PC-3 (cell line): ENCODE measurements at regions of chr12 and their contacts with region 1.

Region 1: DNA sequence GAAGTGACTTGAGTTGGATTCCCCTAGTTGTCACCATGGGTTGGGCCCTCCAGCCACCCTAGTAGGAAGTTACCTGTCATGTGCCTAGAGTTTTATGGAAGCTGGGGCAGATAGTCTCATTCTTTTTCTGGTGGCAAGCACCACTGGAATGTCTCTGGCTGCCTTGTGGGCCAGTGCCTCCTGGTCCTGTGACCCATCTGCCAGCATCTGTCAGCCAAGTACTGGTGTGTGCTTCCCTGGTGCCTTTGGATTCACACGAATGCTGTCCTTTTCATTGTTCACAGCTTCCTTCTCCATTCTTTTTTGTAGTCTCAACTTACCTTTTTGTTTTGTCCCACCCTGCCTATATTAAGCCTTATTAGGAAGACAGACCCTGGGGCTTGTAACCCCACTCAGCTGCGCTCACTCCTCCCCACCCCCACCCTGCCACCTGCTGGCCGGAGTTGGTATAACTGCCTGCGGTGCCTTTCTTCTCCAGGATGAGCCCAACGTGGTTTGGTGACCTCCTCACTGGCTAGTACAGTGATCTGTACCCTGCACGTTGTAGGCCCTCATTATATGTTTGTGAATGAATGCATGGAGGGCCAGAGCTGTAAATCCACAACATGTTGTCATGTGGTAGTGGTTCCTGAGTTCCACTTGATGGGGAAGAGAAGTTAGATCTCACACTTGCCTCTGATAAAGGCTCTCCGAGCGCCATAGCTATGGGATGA is 125.7 kb downstream of the TSPAN9 start:
- DNase-seq: peak; percentile 64
- ATAC-seq: peak; percentile 8; the same call in 1 of the 2 replicates
- H3K4me3 ChIP-seq: no peak overlapping the region
- H3K27ac ChIP-seq: no peak overlapping the region
- H3K4me1 ChIP-seq: peaks cover 9% of the 10 kb centered on the region
- H3K27me3 ChIP-seq: peaks cover 22% of the 10 kb centered on the region
- CTCF ChIP-seq: peak; percentile 94

Region 2: DNA sequence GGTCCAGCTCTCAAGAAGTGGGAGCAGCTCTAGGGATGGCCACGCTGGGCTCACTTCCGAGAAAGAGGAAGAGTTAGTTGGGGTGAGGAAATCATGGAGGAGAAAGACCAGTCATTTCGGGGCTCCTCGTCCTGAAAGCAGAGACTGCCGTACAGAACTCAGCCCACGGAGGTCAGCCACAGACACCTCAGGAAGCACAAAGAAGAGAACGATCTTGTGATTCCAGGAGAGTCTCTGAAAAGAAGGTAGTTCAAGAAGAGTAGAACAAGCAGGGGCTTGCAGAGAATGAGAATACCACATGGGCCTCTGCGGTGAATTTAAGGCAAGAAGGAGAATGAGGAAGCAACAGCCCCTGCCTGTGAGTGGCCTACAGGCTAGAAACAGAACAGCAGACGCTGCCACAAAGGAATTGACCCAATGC is 838.2 kb before region 1 on chr12:
- CTCF ChIA-PET with region 1: no interaction called
- POLR2A ChIA-PET with region 1: no interaction called
- intact Hi-C with region 1: no loop called
- DNase-seq: no peak
- ATAC-seq: no peak
- H3K4me3 ChIP-seq: no peak overlapping the region
- H3K27ac ChIP-seq: no peak overlapping the region
- H3K4me1 ChIP-seq: no peaks in the 10 kb centered on the region
- H3K27me3 ChIP-seq: peaks cover 20% of the 10 kb centered on the region
- CTCF ChIP-seq: no peak

Region 3: GRCh38 chr12:3073438-3074250 is 129.2 kb before region 1 on chr12:
- CTCF ChIA-PET with region 1: no interaction called
- POLR2A ChIA-PET with region 1: no interaction called
- intact Hi-C with region 1: loop called (anchors 2 kb)
- DNase-seq: peak; percentile 87
- ATAC-seq: peak; percentile 45
- H3K4me3 ChIP-seq: no peak overlapping the region
- H3K27ac ChIP-seq: no peak overlapping the region
- H3K4me1 ChIP-seq: peaks cover 9% of the 10 kb centered on the region
- H3K27me3 ChIP-seq: no peaks in the 10 kb centered on the region
- CTCF ChIP-seq: peak; percentile 96

Region 4: DNA sequence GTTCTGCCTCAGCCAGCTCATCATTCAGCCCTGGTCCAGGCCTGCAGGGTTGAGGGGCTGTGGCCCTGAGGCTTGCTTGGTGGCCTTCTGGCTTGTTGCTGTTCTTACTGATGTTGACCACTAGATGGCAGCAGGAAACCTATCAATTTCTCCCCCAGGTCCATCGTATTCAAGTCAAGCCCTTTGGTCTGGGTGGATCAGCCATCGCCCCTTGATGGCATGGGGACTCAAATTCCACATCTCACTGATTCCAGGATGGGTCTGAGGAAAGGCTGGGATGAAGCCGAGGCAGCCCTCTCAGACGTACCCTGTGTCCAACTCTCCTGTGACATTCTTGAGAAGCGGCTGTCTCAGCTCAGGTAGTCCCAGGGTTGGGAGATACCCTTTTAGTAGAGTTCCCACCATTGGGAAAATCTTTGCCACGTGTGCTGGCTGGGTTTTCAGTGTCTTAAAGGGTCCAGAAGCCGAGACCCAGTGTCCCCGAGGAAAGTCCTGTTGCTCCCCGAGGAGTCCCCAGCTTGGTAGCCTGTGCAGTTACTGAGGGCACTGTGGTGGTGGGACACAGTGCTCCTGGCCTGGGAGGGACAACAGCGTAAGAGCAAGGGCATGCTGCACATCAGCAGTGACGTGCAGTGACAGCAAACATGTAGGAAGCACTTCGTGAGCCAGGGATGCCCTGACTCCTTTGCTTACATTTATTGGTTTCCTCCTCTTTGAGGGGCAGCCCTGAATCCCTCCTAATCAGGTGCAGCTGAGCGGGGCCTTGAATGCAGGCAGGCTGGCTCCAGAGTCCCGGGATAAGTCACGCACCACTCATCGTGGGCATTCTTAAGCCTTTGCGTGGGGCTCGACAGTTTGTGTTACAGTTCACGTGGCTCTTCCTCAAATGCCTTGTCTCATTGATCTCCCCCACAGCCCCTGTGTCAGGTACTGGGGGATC is 67.1 kb before region 1 on chr12:
- CTCF ChIA-PET with region 1: no interaction called
- POLR2A ChIA-PET with region 1: no interaction called
- intact Hi-C with region 1: loop called (anchors 1 kb)
- DNase-seq: peak; percentile 69
- ATAC-seq: peak; percentile 88
- H3K4me3 ChIP-seq: no peak overlapping the region
- H3K27ac ChIP-seq: no peak overlapping the region
- H3K4me1 ChIP-seq: no peaks in the 10 kb centered on the region
- H3K27me3 ChIP-seq: no peaks in the 10 kb centered on the region
- CTCF ChIP-seq: peak; percentile 79

Region 5: GRCh38 chr12:3168223-3169221 is 34.4 kb before region 1 on chr12:
- CTCF ChIA-PET with region 1: no interaction called
- POLR2A ChIA-PET with region 1: no interaction called
- intact Hi-C with region 1: loop called (anchors 2 kb)
- DNase-seq: peak; percentile 91
- ATAC-seq: peak; percentile 87
- H3K4me3 ChIP-seq: peak overlapping the region; percentile 53
- H3K27ac ChIP-seq: peak overlapping the region; percentile 91
- H3K4me1 ChIP-seq: peaks cover 40% of the 10 kb centered on the region
- H3K27me3 ChIP-seq: no peaks in the 10 kb centered on the region
- CTCF ChIP-seq: no peak

Region 6: DNA sequence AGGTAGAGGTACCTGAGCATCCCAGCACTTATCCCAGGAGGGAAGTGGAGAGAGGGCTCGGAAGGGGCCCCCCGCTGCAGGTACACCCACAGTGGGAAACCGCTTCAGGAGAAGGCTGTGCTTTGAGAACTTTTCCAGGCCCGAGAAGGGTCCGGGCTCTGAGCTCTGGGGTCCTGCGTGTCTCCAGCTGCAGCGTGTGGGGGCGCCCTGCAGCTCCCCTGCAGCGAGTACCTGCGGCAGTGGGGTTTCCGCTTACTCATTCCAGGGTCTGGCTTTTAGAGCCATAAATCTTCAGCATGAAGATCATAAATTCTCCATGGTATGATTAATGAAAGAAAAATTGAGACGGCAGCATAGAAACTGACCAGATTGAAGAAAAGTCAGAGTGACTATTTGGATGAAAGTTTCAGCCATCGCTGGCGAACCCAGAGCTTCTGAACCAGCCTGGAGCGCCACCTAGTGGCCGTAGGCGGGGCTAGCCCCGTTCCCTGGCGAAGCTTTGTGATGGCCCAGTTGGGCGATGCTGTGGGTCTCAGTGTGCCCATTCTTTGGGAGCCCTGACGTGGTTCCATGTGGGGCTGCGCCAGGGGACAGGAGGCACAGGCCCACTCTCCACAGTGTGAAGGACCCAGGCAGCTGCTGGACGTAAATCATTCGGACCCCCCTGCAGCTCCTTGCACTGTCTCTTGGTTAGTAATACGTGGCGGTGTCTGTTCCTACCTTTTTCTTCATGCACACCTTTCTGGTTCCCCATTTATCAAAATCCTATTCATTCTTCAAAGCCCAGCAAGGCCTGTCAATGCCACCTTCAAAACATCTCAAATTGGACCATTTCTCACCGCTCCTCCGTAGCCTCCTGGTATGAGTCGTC is 72.5 kb after region 1 on chr12:
- CTCF ChIA-PET with region 1: no interaction called
- POLR2A ChIA-PET with region 1: no interaction called
- intact Hi-C with region 1: loop called (anchors 10 kb)
- DNase-seq: peak; percentile 81
- ATAC-seq: peak; percentile 65
- H3K4me3 ChIP-seq: no peak overlapping the region
- H3K27ac ChIP-seq: no peak overlapping the region
- H3K4me1 ChIP-seq: peaks cover 13% of the 10 kb centered on the region
- H3K27me3 ChIP-seq: no peaks in the 10 kb centered on the region
- CTCF ChIP-seq: peak; percentile 94